ENCODE measurements at regions of chr12 and their contacts with region 1.

Region 1: GRCh38 chr12:116172224-116172849 is 105.2 kb downstream of the MED13L start:
- DNase-seq: peak; percentile 39
- H3K4me3 Mint-ChIP-seq: peak overlapping the region; percentile 70
- H3K27ac Mint-ChIP-seq: peak overlapping the region; percentile 88
- H3K4me1 Mint-ChIP-seq: peaks cover 49% of the 10 kb centered on the region
- H3K27me3 Mint-ChIP-seq: no peaks in the 10 kb centered on the region

Region 2: DNA sequence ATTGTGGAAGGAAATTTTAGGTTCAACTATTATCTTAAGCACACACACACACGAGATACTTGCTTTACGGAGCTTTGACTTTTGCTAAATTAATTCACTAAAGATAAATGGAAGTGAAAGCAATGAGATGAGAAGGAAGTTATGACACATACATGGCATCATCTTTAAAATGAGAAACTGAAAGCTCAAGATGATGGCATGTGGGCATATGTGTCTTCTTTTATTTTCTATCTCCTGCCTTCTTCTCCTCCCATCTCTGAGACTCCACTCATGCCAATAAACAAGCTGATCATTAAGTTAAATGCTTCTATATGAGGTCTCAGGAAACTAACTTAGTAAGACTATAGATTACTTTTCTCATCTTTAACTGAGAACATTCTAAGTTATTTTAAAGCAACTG is 111.6 kb before region 1 on chr12:
- intact Hi-C with region 1: loop called (anchors 1 kb)
- DNase-seq: peak; percentile 2
- H3K4me3 Mint-ChIP-seq: peak overlapping the region; percentile 61
- H3K27ac Mint-ChIP-seq: peak overlapping the region; percentile 76
- H3K4me1 Mint-ChIP-seq: peaks cover 32% of the 10 kb centered on the region
- H3K27me3 Mint-ChIP-seq: no peaks in the 10 kb centered on the region

Region 3: GRCh38 chr12:116087962-116088361 is 84.4 kb before region 1 on chr12:
- intact Hi-C with region 1: loop called (anchors 1 kb)
- DNase-seq: no peak
- H3K4me3 Mint-ChIP-seq: no peak overlapping the region
- H3K27ac Mint-ChIP-seq: peak overlapping the region; percentile 19
- H3K4me1 Mint-ChIP-seq: peaks cover 48% of the 10 kb centered on the region
- H3K27me3 Mint-ChIP-seq: no peaks in the 10 kb centered on the region

Region 4: GRCh38 chr12:116183741-116184141 is 11.4 kb after region 1 on chr12:
- intact Hi-C with region 1: loop called (anchors 1 kb)
- DNase-seq: no peak
- H3K4me3 Mint-ChIP-seq: no peak overlapping the region
- H3K27ac Mint-ChIP-seq: no peak overlapping the region
- H3K4me1 Mint-ChIP-seq: peaks cover 58% of the 10 kb centered on the region
- H3K27me3 Mint-ChIP-seq: no peaks in the 10 kb centered on the region

Region 5: DNA sequence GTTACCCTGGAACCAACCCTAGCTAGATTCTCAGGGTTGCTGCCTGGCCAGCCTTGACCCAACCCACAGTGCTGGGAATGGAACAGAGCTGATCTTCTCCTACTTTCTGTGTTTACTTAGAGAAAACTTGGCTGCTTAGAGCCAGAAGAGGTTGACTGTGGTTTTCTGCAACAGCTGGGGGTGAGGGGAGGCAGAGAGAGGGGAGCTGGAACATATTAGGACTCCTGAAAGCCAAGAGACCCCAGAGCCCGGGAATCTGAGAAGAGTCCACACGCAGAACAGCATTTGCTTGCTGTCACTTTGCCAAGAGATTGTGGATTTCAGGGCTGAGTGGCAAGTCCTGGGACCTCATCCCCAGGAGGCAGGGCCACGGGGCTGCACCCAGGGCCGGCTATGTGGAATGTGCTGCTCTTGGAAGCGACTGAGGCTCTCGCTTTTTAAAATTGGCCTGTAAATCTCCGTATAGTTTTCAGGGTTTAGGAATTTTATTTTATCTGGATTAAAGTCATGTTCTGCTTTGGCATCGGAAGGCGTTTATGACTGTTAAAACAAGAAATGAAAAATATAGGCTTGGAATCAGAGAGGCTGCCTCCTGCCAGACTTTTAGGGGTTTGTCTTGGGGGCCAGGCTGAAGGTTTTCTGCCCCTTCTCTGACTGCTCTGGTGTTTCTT is 127.5 kb after region 1 on chr12:
- intact Hi-C with region 1: no loop called
- DNase-seq: no peak
- H3K4me3 Mint-ChIP-seq: no peak overlapping the region
- H3K27ac Mint-ChIP-seq: no peak overlapping the region
- H3K4me1 Mint-ChIP-seq: no peaks in the 10 kb centered on the region
- H3K27me3 Mint-ChIP-seq: peaks cover 22% of the 10 kb centered on the region

Region 6: GRCh38 chr12:117190210-117190781 is 1018.0 kb after region 1 on chr12 and contains the start of gene FBXO21:
- intact Hi-C with region 1: loop called (anchors 5 kb)
- DNase-seq: peak; percentile 89
- H3K4me3 Mint-ChIP-seq: peak within 1 kb of the TSS; percentile 96
- H3K27ac Mint-ChIP-seq: peak within 1 kb of the TSS; percentile 80
- H3K4me1 Mint-ChIP-seq: peaks cover 27% of the 10 kb centered on the region
- H3K27me3 Mint-ChIP-seq: peaks cover 11% of the 10 kb centered on the region
- total RNA-seq, gene FBXO21: 24.8 and 25.2 TPM in 2 replicates

Measured in activated T-helper 1 cell treated with anti-CD3 and anti-CD28 coated beads, Interleukin-12 subunit alpha, Interleukin-12 subunit beta, Interleukin-2, Interleukin-4 antibody, amounts not matched to agents 30 ng/mL and 10 ng/mL and 1 ng/mL, durations not matched to agents 14 hours and 24 hours and 36 hours (primary cell).